ENCODE measurements at regions of chr14 and their contacts with region 1.

Region 1: DNA sequence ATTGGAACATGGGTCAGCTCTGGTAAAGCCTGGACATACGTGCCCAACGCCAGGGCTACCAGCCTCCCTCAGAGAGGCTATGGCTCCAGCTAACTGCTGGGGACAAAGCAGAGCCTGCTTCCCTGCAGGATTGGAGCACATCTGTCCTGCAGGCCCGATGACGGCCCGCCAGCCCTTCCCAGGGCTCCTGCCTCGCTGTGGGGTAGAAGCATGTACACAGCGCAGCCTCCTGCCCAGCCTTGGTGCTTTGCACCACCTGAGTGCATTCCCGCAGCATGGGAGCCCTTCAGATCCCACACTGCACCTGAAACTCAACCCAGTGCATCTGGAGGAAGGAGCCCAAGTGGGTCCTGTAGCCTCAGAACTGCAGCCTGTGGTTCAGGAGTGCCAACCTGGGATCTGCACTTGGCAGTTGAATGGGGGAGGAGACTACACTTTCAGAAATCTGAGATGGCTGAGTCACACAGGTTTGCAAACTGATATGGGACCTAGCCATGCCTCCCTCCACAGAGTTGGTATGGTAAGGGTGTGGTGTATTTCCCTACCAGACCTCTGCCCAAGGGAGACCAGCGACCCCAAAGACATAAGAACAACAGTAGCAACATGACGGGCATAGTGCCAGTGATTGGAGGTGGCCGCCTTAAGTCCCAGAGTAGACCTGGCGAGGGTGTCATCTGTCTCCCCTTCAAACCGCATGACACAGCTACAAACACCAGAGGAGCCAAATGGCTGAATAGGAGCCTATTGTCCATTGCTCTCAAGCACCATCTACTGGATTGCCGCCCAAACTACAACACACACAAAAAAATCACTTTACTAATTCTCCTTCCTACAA is 273.9 kb upstream of the MIS18BP1 start:
- DNase-seq: no peak

Region 2: GRCh38 chr14:45426670-45427282 is 100.2 kb before region 1 on chr14:
- intact Hi-C with region 1: loop called (anchors 2 kb)
- DNase-seq: no peak

Measured in cardiac septum (tissue), 1 donor.